Activated CD4-positive, alpha-beta memory T cell treated with anti-CD3 and anti-CD28 coated beads for 36 hours (primary cell): ENCODE measurements at regions of chr12 and their contacts with region 1.

Region 1: DNA sequence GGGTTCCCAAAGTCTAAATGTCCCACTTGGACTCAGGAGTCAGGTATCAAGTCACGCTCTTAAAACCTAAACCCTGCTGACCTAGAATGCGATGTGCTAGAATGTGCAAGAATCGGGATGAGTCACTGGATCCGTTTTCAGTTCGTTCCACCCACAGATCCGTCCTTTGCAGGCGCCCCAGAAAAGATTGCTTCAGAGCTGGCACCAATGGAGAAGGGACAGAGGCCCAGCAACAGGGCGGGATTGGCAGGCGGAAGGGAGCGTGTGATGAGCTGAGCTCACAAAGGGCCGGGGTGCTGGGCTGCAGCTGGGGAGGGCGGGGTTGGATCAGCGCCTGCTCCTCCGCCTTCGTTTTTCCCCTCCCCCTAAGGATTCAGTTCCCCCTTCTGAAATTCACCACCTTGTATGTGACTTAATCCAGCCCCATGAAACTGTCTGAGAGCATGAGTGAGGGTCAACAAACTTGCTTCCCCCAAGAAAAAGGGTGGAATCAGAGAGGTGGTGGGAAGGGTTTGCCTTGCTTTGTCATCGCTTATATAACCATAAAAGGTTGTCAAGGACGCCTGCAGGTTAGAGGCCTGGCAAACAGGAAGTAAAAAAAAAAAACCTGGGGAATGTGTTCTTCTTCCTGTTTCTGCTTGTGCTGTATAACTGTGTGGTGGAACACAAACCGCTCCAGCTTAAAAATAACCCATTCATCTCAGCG is 2.8 kb upstream of the UBC start:
- DNase-seq: peak; percentile 97
- H3K4me3 Mint-ChIP-seq: peak overlapping the region; percentile 100
- H3K27ac Mint-ChIP-seq: peak overlapping the region; percentile 100
- H3K4me1 Mint-ChIP-seq: peaks cover 93% of the 10 kb centered on the region
- H3K27me3 Mint-ChIP-seq: peaks cover 15% of the 10 kb centered on the region

Region 2: GRCh38 chr12:123436017-123436964 is 1481.0 kb before region 1 on chr12 and contains the start of gene RILPL2:
- CTCF ChIA-PET with region 1: no interaction called
- POLR2A ChIA-PET with region 1: no interaction called
- intact Hi-C with region 1: loop called (anchors 5 kb)
- DNase-seq: peak; percentile 97
- H3K4me3 Mint-ChIP-seq: peak within 1 kb of the TSS; percentile 99
- H3K27ac Mint-ChIP-seq: peak within 1 kb of the TSS; percentile 98
- H3K4me1 Mint-ChIP-seq: peaks cover 30% of the 10 kb centered on the region
- H3K27me3 Mint-ChIP-seq: no peaks in the 10 kb centered on the region
- total RNA-seq, gene RILPL2: 15.4 to 16.6 TPM

Region 3: DNA sequence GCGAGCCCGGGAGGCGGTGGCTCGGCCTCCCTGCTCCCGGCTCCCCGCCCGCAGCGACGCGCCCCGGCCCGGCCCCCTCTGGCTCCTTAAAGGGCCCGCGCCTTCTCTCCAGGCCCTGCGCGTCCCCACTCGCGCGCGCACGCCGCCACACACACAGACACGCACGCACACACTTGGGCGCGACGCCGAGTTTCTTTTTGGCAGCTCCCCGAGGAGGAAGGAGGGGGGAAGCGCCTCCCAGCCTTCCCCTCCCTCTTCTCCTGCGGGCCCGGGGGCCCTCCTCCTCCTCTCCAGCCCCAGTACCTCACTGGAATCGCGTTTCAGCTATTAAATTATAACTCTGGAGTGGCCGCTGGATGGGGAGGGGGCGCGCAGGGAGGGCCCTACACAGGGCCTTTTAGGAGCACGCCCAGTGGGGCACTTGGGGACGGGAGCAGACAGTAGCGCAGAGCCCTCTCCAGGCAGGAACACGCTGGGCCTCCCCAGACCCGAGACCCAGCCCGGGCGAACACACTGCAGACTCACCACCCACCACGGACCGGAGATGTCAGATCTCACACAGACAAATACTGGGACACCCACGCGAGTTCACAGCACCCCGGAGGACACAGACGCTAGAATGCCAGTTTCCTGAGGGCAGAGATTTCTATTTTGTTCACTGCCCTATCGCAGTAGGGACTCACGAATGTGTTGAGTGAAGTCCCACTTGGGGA is 349.5 kb before region 1 on chr12:
- CTCF ChIA-PET with region 1: no interaction called
- POLR2A ChIA-PET with region 1: no interaction called
- intact Hi-C with region 1: loop called (anchors 10 kb)
- DNase-seq: peak; percentile 83
- H3K4me3 Mint-ChIP-seq: peak overlapping the region; percentile 74
- H3K27ac Mint-ChIP-seq: peak overlapping the region; percentile 42
- H3K4me1 Mint-ChIP-seq: peaks cover 26% of the 10 kb centered on the region
- H3K27me3 Mint-ChIP-seq: no peaks in the 10 kb centered on the region

Region 4: DNA sequence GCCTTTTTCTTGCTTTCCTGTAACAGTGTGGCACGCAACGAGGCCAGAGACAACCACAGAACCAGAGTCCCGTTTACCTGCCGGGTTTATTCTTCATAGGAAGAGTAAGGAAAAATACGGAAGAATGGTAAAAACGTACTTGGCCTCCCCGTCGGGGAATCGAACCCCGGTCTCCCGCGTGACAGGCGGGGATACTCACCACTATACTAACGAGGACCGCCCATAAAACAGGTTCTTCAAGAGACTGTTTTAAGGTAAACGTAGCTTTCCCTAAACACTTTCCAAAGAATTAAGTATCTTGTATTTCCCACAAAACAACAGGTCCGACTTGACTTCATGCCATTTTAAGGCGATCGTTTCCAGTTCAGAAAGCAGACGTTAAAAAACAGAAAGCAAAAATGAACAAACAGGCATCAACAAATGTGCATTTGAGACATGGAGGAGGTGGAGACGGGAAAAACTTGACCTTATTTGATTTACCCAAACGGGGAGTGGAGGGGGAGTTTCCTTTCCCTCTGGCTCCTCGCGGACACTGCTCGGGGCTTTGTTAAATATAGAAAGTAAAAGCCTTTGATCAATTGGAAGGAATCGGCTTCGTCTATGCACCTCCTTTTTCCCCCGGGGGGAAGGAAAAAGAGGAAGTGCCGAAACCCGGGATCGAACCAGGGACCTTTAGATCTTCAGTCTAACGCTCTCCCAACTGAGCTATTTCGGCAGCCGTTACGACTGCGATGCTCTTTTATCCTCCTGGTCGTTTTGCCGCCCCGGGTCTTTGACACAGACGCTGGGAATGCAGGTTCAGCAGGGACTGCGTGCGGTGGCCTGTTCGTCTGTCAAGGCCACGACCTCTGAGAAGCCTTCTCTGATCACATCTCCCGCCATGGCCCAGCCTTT is 10.2 kb after region 1 on chr12:
- CTCF ChIA-PET with region 1: interaction called, 7 read pairs
- POLR2A ChIA-PET with region 1: interaction called, 12 read pairs
- intact Hi-C with region 1: loop called (anchors 1 kb)
- DNase-seq: peak; percentile 97
- H3K4me3 Mint-ChIP-seq: peak overlapping the region; percentile 94
- H3K27ac Mint-ChIP-seq: peak overlapping the region; percentile 96
- H3K4me1 Mint-ChIP-seq: peaks cover 32% of the 10 kb centered on the region
- H3K27me3 Mint-ChIP-seq: peaks cover 5% of the 10 kb centered on the region

Region 5: GRCh38 chr12:124992874-124993625 is 75.8 kb after region 1 on chr12:
- CTCF ChIA-PET with region 1: interaction called, 3 read pairs
- POLR2A ChIA-PET with region 1: interaction called, 3 read pairs
- intact Hi-C with region 1: loop called (anchors 1 kb)
- DNase-seq: peak; percentile 94
- H3K4me3 Mint-ChIP-seq: peak overlapping the region; percentile 79
- H3K27ac Mint-ChIP-seq: peak overlapping the region; percentile 90
- H3K4me1 Mint-ChIP-seq: peaks cover 29% of the 10 kb centered on the region
- H3K27me3 Mint-ChIP-seq: no peaks in the 10 kb centered on the region